ENCODE measurements at regions of chr11 and their contacts with region 1.

Region 1: DNA sequence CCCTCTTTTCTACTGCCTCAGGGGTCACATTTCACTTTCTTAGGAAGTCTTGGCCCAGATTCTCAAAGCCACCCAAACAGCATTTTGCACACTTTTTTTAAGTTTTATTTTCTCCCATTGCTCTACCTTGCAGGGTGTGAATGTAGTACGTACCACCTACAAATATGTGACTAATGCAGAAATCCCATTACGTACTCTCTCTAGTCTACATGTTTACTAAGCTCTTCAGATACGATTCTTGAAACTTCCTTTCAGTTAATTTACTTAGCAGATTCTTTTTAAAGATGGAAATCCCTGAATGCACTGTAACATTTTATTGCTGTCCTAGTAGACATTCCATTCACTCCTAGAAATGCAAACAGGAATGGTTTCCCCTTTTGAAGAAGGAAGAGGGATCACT is 61.3 kb downstream of the LRRC4C start:
- DNase-seq: peak in 1 of 2 experiments; percentile 39
- H3K4me3 ChIP-seq: no peak overlapping the region
- H3K4me3 Mint-ChIP-seq: peak overlapping the region; percentile 44
- H3K27ac Mint-ChIP-seq: peak overlapping the region; percentile 96
- H3K4me1 ChIP-seq: peaks cover 27% of the 10 kb centered on the region
- H3K4me1 Mint-ChIP-seq: peaks cover 50% of the 10 kb centered on the region
- H3K27me3 ChIP-seq: no peaks in the 10 kb centered on the region
- H3K27me3 Mint-ChIP-seq: no peaks in the 10 kb centered on the region
- CTCF ChIP-seq: no peak

Region 2: DNA sequence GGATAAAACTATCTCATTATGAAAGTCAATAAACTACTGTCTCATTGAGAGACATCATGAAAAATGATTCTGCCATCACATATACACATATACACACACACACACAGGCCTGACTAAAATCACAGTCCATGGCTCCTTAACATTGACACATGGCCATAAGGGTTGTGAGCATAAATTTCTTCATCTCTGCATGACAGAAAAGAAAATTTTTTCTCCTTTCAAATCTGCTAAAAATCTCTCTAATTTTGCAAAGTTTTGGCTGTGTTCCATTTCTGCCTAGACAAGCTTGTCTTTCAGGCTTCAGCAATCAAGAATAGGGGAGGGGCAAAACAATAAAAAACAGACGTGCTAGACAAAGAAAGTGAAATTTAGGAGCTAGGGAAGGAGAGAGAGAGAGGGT is 263.2 kb before region 1 on chr11:
- CTCF ChIA-PET with region 1: no interaction called
- POLR2A ChIA-PET with region 1: no interaction called
- intact Hi-C with region 1: loop called (anchors 5 kb)
- DNase-seq: no peak
- H3K4me3 ChIP-seq: no peak overlapping the region
- H3K4me3 Mint-ChIP-seq: no peak overlapping the region
- H3K27ac Mint-ChIP-seq: no peak overlapping the region
- H3K4me1 ChIP-seq: peaks cover 9% of the 10 kb centered on the region; the same call in 1 of the 2 replicates
- H3K4me1 Mint-ChIP-seq: peaks cover 12% of the 10 kb centered on the region
- H3K27me3 ChIP-seq: no peaks in the 10 kb centered on the region
- H3K27me3 Mint-ChIP-seq: no peaks in the 10 kb centered on the region
- CTCF ChIP-seq: no peak